CD8-positive, alpha-beta T cell (primary cell): ENCODE measurements at regions of chr15 and their contacts with region 1.

Region 1: DNA sequence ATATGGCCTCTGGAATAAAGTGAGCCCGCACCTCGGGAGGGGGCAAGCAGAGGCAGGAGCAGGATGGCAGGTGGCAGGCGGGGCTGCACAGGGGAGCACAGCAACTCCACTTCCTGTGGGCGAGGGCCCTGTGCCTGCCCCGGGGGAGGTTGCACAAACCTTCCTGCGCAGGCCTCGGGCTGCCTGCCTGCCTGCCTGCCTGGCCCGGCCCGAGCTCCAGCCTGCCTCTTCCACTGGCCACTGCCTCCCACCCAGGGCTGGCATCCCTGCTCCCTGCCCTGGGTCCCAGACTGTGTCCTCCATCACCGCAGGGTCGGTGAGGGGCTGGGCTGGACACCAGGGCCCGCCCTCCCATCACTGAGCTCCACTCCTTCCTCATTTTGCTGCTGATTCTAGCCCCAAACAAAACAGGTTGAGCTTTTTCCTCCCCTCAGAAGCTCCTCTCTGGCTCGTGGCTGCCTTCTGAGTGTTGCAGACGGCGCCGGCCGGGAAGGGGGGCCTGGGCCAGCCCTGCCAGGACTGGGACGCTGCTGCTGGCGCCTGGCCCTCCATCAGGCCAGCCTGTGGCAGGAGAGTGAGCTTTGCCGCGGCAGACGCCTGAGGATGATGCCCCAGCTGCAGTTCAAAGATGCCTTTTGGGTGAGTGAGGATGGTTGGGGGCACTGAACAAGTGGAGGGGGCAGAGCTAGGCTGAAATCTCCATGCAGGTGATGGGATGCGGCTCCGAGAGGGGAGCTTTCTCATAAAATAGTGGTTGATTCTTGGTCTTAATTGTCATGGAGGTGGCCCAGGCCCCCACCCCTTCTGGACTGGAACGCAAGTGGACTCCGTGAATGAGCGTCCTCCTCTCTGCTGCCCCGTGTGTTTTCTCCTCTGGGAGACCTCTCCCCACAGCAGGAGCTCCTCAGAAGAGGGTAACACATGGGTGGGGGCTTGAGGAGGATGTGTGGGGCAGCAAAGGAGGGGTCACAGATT is at the start of gene PSTPIP1:
- DNase-seq: peak; percentile 42 to 89 (median 77)
- ATAC-seq: peak; percentile 71
- H3K4me3 ChIP-seq: peak within 1 kb of the TSS; percentile 87
- H3K4me3 Mint-ChIP-seq: peak within 1 kb of the TSS; percentile 90
- H3K27ac ChIP-seq: peak within 1 kb of the TSS; percentile 80 to 81
- H3K27ac Mint-ChIP-seq: peak within 1 kb of the TSS; percentile 97
- H3K4me1 ChIP-seq: peaks cover 64% of the 10 kb centered on the region
- H3K4me1 Mint-ChIP-seq: peaks cover 64% of the 10 kb centered on the region
- H3K27me3 ChIP-seq: no peaks in the 10 kb centered on the region
- H3K27me3 Mint-ChIP-seq: no peaks in the 10 kb centered on the region
- CTCF ChIP-seq: no peak
- total RNA-seq, gene PSTPIP1: 86.7 to 88.0 TPM

Region 2: DNA sequence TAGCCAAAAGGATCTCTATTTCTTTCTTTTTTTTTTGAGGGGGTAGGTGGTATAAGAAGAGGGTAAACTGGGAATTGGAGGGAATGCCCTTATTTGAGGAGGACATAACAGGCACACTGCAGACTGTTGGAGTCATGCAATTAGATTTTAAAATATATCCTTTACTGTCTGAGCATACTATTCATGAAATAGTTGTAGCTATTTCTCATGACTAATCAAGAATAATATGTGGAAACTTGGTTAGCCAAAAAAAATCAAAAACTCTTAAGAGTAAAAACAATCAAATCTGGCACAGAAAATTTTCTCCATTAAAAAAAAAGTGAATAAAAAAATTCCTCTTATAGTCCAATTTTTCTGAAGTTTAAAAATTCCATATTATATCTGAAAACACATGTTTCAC is 265.0 kb before region 1 on chr15:
- CTCF ChIA-PET with region 1: no interaction called
- POLR2A ChIA-PET with region 1: no interaction called
- intact Hi-C with region 1: no loop called
- DNase-seq: no peak
- ATAC-seq: no peak
- H3K4me3 ChIP-seq: no peak overlapping the region
- H3K4me3 Mint-ChIP-seq: no peak overlapping the region
- H3K27ac ChIP-seq: no peak overlapping the region
- H3K27ac Mint-ChIP-seq: no peak overlapping the region
- H3K4me1 ChIP-seq: no peaks in the 10 kb centered on the region
- H3K4me1 Mint-ChIP-seq: no peaks in the 10 kb centered on the region
- H3K27me3 ChIP-seq: no peaks in the 10 kb centered on the region
- H3K27me3 Mint-ChIP-seq: no peaks in the 10 kb centered on the region
- CTCF ChIP-seq: no peak

Region 3: DNA sequence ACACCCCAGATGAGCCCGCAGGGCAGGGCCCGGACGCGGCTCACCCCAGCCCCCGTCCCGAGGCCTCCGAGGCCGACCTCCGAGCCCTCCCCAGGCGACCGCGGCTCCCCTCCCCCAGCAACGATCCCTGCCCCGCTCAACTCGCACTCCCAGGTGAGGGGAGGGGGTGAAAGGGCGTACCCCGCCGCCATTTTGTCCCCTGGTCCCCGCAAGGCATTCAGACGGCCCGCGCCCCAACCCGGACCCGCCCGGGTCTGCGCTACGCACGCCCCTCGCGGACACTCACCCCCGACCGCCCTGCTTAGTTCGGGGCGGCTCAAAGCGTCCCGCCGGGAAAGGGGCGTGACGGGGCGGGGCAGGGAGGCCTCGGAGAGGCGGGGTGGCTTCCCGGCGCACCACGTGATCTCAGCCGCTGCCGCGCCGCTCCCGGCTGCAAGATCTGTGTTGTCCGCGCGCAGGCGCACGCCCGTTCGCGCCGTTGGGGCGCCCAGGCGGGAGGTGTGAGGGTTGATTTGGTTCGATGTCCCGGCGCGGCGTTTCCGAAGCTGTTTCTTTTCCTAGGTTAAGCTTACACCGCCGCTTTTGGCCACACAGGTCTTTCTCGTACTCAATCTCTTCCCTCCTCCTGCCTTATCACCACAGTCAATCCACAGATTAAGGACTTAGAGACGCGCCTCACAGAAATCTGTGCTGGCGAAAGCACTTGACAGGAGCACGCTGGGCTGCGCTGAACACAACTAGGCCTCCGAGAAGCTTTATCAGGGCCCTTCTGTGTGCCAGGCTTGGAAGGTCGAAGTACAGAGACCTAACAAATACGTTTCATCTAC is 90.0 kb before region 1 on chr15 and contains the start of gene SCAPER:
- CTCF ChIA-PET with region 1: no interaction called
- POLR2A ChIA-PET with region 1: interaction called, 7 read pairs
- intact Hi-C with region 1: loop called in 1 of 2 experiments (anchors 10 kb)
- DNase-seq: peak; percentile 72 to 95 (median 92)
- ATAC-seq: peak; percentile 86
- H3K4me3 ChIP-seq: peak within 1 kb of the TSS; percentile 82 to 88
- H3K4me3 Mint-ChIP-seq: peak within 1 kb of the TSS; percentile 91
- H3K27ac ChIP-seq: peak within 1 kb of the TSS; percentile 47 to 81
- H3K27ac Mint-ChIP-seq: peak within 1 kb of the TSS; percentile 96
- H3K4me1 ChIP-seq: peaks cover 24% of the 10 kb centered on the region
- H3K4me1 Mint-ChIP-seq: peaks cover 36% of the 10 kb centered on the region
- H3K27me3 ChIP-seq: no peaks in the 10 kb centered on the region
- H3K27me3 Mint-ChIP-seq: no peaks in the 10 kb centered on the region
- CTCF ChIP-seq: no peak
- total RNA-seq, gene SCAPER: 21.7 to 29.7 TPM

Region 4: DNA sequence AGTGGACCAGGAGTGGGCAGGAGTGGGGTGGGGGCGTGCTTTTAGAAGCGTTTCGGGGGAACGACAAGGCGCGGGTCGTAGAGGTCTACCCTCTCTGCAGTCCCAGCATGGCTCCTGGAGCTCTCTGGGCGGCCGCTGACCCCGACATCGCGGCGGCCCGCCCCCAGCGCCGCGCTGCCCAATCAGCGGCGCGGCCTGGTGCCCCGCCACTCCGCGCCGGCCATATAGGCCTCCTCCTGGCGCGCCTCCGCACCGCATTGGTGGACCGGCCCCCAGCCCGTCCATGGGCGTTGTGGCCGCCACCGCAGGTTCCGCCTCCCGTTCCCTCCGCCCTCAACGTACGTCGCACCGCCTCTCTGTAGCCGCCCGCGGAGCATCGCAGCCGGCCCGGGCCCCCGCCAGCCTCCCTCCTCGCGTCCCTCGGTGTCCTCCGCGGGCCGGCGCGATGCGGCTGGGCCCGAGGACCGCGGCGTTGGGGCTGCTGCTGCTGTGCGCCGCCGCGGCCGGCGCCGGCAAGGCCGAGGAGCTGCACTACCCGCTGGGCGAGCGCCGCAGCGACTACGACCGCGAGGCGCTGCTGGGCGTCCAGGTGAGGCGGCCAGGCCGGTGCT is 63.8 kb before region 1 on chr15 and contains the start of gene RCN2:
- CTCF ChIA-PET with region 1: no interaction called
- POLR2A ChIA-PET with region 1: interaction called, 18 read pairs
- intact Hi-C with region 1: loop called (anchors 1 to 5 kb)
- DNase-seq: peak; percentile 81 to 96 (median 93)
- ATAC-seq: peak; percentile 97
- H3K4me3 ChIP-seq: peak within 1 kb of the TSS; percentile 62 to 63
- H3K4me3 Mint-ChIP-seq: peak within 1 kb of the TSS; percentile 90
- H3K27ac ChIP-seq: peak within 1 kb of the TSS; percentile 63 to 65
- H3K27ac Mint-ChIP-seq: peak within 1 kb of the TSS; percentile 91
- H3K4me1 ChIP-seq: peaks cover 24% of the 10 kb centered on the region
- H3K4me1 Mint-ChIP-seq: peaks cover 34% of the 10 kb centered on the region
- H3K27me3 ChIP-seq: no peaks in the 10 kb centered on the region
- H3K27me3 Mint-ChIP-seq: no peaks in the 10 kb centered on the region
- CTCF ChIP-seq: no peak
- total RNA-seq, gene RCN2: 25.9 to 29.7 TPM

Region 5: GRCh38 chr15:76973362-76973743 is 21.9 kb before region 1 on chr15:
- CTCF ChIA-PET with region 1: interaction called, 76 read pairs
- POLR2A ChIA-PET with region 1: interaction called, 10 read pairs
- intact Hi-C with region 1: loop called (anchors 2 kb)
- DNase-seq: peak; percentile 39 to 85 (median 75)
- ATAC-seq: peak; percentile 84
- H3K4me3 ChIP-seq: no peak overlapping the region
- H3K4me3 Mint-ChIP-seq: no peak overlapping the region
- H3K27ac ChIP-seq: no peak overlapping the region
- H3K27ac Mint-ChIP-seq: no peak overlapping the region
- H3K4me1 ChIP-seq: peaks cover 4% of the 10 kb centered on the region
- H3K4me1 Mint-ChIP-seq: peaks cover 14% of the 10 kb centered on the region
- H3K27me3 ChIP-seq: no peaks in the 10 kb centered on the region
- H3K27me3 Mint-ChIP-seq: no peaks in the 10 kb centered on the region
- CTCF ChIP-seq: peak; percentile 86

Region 6: DNA sequence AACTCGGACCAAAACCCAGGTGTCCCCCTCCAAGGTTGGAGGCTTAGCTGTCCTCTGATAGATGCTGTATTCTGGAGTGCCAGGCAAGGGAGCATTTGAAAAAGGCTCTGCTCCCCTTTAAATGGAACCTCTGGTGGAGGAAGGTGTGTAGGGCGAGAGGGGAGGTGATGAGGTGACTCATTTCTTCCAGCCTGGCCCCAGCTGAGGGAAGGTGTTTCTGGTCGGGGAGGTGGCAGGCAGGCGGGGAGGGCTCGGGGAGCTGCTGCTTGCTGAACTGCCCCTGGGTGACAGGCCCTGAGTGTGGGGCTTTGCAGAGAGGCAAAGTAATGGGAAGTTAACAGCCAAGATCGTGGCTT is 18.5 kb after region 1 on chr15:
- CTCF ChIA-PET with region 1: interaction called, 19 read pairs
- POLR2A ChIA-PET with region 1: interaction called, 33 read pairs
- intact Hi-C with region 1: loop called (anchors 1 kb)
- DNase-seq: peak; percentile 57 to 94 (median 90)
- ATAC-seq: peak; percentile 77
- H3K4me3 ChIP-seq: peak overlapping the region; percentile 29 to 30
- H3K4me3 Mint-ChIP-seq: peak overlapping the region; percentile 82
- H3K27ac ChIP-seq: peak overlapping the region; percentile 35 to 85
- H3K27ac Mint-ChIP-seq: peak overlapping the region; percentile 97
- H3K4me1 ChIP-seq: peaks cover 97% of the 10 kb centered on the region
- H3K4me1 Mint-ChIP-seq: peaks cover 92% of the 10 kb centered on the region
- H3K27me3 ChIP-seq: no peaks in the 10 kb centered on the region
- H3K27me3 Mint-ChIP-seq: no peaks in the 10 kb centered on the region
- CTCF ChIP-seq: no peak

Region 7: DNA sequence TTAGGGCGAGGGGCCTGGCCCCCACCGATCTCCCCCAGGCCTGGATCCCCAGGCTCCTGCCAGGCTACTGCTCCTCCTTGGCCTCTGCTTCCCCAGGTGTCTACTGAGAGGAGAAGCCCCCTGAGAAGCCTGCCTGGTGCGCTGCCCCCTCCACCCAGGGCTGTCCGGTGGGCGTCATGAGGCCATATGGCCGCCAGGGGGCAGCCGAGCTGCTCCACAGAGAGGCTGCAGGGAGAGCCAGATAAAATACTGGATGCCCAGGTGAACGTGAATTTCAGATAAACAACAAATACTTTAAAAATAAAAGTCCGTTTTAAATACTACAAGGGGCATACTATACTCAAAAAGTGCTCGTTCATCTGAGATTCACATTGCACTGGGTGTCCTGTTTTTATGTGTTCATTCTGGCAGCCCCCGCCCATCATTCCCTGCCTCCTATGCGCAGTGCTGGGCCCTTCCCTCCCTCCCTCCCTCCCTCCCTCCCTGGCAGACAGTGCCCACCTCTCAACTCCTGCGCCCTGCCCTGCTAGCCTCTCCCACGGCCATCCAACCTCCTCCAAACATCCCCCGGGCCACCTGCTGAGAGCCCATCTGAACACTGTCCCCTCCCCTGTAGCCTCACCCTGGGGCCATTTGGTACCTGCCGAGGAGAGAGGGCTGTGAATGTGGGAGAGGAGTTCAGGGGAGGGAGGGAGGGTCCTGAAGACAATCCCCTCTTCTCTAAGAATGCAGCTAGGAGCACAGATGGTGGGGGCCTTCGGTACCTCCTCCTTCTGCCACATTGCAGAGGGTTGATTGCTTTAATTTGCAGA is 29.2 kb after region 1 on chr15:
- CTCF ChIA-PET with region 1: interaction called, 61 read pairs
- POLR2A ChIA-PET with region 1: interaction called, 18 read pairs
- intact Hi-C with region 1: loop called (anchors 2 kb)
- DNase-seq: peak; percentile 39 to 83 (median 71)
- ATAC-seq: no peak
- H3K4me3 ChIP-seq: no peak overlapping the region
- H3K4me3 Mint-ChIP-seq: no peak overlapping the region
- H3K27ac ChIP-seq: peak overlapping the region in 1 of 2 experiments; percentile 85
- H3K27ac Mint-ChIP-seq: peak overlapping the region; percentile 74
- H3K4me1 ChIP-seq: peaks cover 49% of the 10 kb centered on the region
- H3K4me1 Mint-ChIP-seq: peaks cover 56% of the 10 kb centered on the region
- H3K27me3 ChIP-seq: no peaks in the 10 kb centered on the region
- H3K27me3 Mint-ChIP-seq: no peaks in the 10 kb centered on the region
- CTCF ChIP-seq: peak; percentile 96

Region 8: GRCh38 chr15:77419836-77420609 is 424.8 kb after region 1 on chr15 and contains the start of gene PEAK1:
- CTCF ChIA-PET with region 1: no interaction called
- POLR2A ChIA-PET with region 1: no interaction called
- intact Hi-C with region 1: loop called in 1 of 2 experiments (anchors 2 kb)
- DNase-seq: peak; percentile 99 to 100 (median 100)
- ATAC-seq: peak; percentile 99
- H3K4me3 ChIP-seq: peak within 1 kb of the TSS; percentile 74 to 75
- H3K4me3 Mint-ChIP-seq: peak within 1 kb of the TSS; percentile 97
- H3K27ac ChIP-seq: peak within 1 kb of the TSS; percentile 61 to 93
- H3K27ac Mint-ChIP-seq: peak within 1 kb of the TSS; percentile 97
- H3K4me1 ChIP-seq: peaks cover 17% of the 10 kb centered on the region
- H3K4me1 Mint-ChIP-seq: peaks cover 49% of the 10 kb centered on the region
- H3K27me3 ChIP-seq: no peaks in the 10 kb centered on the region
- H3K27me3 Mint-ChIP-seq: no peaks in the 10 kb centered on the region
- CTCF ChIP-seq: no peak
- total RNA-seq, gene PEAK1: 12.4 to 15.7 TPM